MCF 10A (cell line): ENCODE measurements at regions of chr11 and their contacts with region 1.

Region 1: DNA sequence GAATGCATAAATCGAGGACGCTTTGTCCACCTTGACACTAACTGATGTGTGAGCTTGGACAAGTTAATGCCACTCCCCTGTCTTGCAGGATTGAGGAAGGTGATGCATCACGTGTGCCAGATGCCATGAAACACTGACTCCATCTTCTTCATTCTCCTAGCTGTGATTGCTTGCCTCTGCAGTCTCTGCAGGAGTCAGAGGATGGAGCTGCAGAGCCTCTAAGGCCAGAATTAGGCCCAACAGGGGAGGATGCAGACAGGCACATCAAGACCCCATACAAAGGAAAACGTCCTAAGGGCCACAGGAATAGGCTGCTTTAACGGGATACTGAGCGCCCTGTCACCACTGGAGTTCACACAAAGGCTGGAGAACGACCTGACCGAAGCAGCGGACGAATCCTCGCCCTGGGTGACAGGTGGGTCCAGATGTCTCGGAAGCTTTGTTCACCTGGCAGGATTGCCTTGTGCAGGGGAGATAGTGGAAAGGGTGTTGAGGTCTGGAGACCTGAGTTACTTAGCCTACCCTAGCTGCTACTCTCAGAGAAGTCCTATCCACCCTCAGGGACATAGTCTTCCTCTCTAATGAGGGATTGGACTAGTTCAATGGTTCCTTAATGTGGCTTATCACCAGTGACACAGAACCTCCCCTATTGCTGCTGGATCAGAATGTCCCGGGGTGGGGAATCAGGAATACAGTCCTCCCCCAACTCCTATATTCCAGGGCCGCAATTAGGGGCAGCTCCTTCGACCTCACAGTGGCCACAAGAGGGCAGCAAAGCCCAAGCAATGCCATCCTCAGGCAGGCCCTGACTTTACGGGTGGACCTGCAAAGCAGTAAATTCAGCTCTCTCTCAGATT is 32.4 kb downstream of the DBX1 start:
- DNase-seq: peak; percentile 74
- H3K4me3 Mint-ChIP-seq: no peak overlapping the region
- H3K27ac Mint-ChIP-seq: peak overlapping the region; percentile 23
- H3K4me1 Mint-ChIP-seq: peaks cover 25% of the 10 kb centered on the region
- H3K27me3 Mint-ChIP-seq: no peaks in the 10 kb centered on the region
- CTCF ChIP-seq: peak; percentile 81

Region 2: GRCh38 chr11:19912958-19913892 is 214.7 kb before region 1 on chr11:
- CTCF ChIA-PET with region 1: interaction called, 84 read pairs
- POLR2A ChIA-PET with region 1: no interaction called
- intact Hi-C with region 1: no loop called
- DNase-seq: no peak
- H3K4me3 Mint-ChIP-seq: no peak overlapping the region
- H3K27ac Mint-ChIP-seq: no peak overlapping the region
- H3K4me1 Mint-ChIP-seq: peaks cover 9% of the 10 kb centered on the region
- H3K27me3 Mint-ChIP-seq: no peaks in the 10 kb centered on the region
- CTCF ChIP-seq: no peak

Region 3: GRCh38 chr11:19938169-19938856 is 189.6 kb before region 1 on chr11:
- CTCF ChIA-PET with region 1: interaction called, 79 read pairs
- POLR2A ChIA-PET with region 1: interaction called, 4 read pairs
- intact Hi-C with region 1: loop called (anchors 1 kb)
- DNase-seq: peak; percentile 72
- H3K4me3 Mint-ChIP-seq: no peak overlapping the region
- H3K27ac Mint-ChIP-seq: peak overlapping the region; percentile 47
- H3K4me1 Mint-ChIP-seq: peaks cover 24% of the 10 kb centered on the region
- H3K27me3 Mint-ChIP-seq: no peaks in the 10 kb centered on the region
- CTCF ChIP-seq: peak; percentile 80

Region 4: GRCh38 chr11:20089796-20090653 is 37.9 kb before region 1 on chr11:
- CTCF ChIA-PET with region 1: interaction called, 10 read pairs
- POLR2A ChIA-PET with region 1: no interaction called
- intact Hi-C with region 1: no loop called
- DNase-seq: no peak
- H3K4me3 Mint-ChIP-seq: no peak overlapping the region
- H3K27ac Mint-ChIP-seq: peak overlapping the region; percentile 39
- H3K4me1 Mint-ChIP-seq: peaks cover 9% of the 10 kb centered on the region
- H3K27me3 Mint-ChIP-seq: no peaks in the 10 kb centered on the region
- CTCF ChIP-seq: no peak

Region 5: GRCh38 chr11:20327377-20327935 is 199.6 kb after region 1 on chr11:
- CTCF ChIA-PET with region 1: interaction called, 13 read pairs
- POLR2A ChIA-PET with region 1: no interaction called
- intact Hi-C with region 1: no loop called
- DNase-seq: no peak
- H3K4me3 Mint-ChIP-seq: no peak overlapping the region
- H3K27ac Mint-ChIP-seq: no peak overlapping the region
- H3K4me1 Mint-ChIP-seq: no peaks in the 10 kb centered on the region
- H3K27me3 Mint-ChIP-seq: peaks cover 91% of the 10 kb centered on the region
- CTCF ChIP-seq: no peak

Region 6: DNA sequence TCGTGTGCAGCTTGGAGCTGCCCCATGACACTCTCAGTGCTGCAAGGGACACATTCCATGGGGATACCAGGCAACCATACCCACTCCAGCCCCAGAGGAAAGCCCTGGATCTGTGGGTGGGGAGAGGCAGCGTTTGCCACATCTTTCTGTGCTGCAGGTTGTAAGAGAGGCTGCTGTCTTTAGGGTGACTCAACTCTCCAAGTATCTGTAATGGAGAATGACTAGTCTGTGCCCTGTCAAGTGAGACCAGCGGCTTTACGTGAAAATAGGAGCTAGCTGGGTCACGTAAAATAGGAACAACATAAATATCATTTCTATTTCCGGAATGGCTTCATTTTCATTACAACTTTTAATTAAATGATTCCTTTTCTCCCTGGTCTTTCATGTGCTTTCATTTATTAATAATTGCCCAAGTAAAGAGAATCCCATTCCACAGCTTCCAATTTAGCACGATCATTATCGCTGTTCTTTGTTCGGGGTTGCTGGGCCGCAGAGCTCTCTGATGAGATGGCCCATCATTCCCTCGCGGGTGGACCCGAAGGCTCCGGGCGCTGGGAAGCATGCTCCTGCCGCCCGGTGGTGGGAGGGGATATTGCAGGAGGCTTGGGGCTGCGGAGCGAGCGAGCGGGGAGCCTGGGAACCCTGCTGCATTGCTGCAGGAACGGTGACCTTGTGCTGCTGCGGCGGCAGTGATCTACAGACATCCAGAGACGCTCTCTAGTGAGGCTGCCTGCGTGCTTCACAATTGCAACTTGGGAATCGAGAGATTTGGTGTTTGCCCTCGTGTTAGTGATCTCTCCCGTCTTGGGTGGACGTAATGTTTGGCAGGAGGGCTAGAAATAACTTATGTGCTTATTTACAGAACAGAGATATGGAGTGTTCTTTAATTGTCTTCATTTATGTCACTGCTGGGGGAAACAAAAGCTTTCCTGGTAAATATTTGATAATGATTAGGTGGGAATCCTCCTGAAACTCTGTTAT is 482.1 kb after region 1 on chr11:
- CTCF ChIA-PET with region 1: interaction called, 26 read pairs
- POLR2A ChIA-PET with region 1: no interaction called
- intact Hi-C with region 1: loop called (anchors 5 kb)
- DNase-seq: peak; percentile 82
- H3K4me3 Mint-ChIP-seq: peak overlapping the region; percentile 56
- H3K27ac Mint-ChIP-seq: no peak overlapping the region
- H3K4me1 Mint-ChIP-seq: peaks cover 7% of the 10 kb centered on the region
- H3K27me3 Mint-ChIP-seq: peaks cover 75% of the 10 kb centered on the region
- CTCF ChIP-seq: peak; percentile 95